Transverse colon (tissue), 4 donors: ENCODE measurements at regions of chr11 and their contacts with region 1.

Region 1: DNA sequence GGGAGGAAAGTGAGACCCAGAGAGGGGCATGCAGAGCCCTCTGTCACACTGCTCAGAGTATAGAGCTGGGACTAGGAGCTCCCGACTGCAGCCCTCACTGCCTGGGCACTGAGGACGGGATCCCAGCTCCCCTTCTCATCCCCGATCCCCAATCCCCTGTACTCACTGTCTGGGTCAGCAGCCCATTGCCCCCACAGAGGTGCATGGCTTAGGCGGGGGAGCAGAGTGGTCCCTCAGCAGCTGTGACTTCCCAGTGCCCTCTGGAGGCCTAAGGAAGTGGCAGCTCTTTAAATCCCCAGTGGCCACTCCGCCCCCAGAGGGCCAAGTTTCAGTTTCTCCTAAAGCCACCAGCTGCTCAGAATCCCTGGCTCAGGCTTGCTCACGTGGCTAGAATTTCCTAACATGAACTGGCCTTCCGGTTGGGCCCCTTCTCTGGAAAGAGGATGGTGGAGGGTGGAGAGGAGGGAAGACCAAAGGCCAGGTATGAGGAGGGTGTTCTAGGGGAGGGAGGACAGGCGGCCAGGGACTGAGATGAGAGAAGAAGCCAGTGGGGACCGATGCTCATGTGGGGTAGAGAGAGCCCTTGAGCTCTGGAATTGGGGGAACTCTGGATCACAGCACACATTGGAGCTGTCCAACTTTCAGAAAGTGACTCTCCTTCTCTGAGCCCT is at the start of gene BATF2:
- DNase-seq: peak; percentile 90
- H3K4me3 ChIP-seq: peak within 1 kb of the TSS; percentile 0 to 63 (median 46)
- H3K27ac ChIP-seq: peak within 1 kb of the TSS; percentile 75 to 89 (median 88)
- H3K4me1 ChIP-seq: peaks cover 22 to 51% (median 38%) of the 10 kb centered on the region in 4 donors
- H3K27me3 ChIP-seq: no peaks in the 10 kb centered on the region
- CTCF ChIP-seq: peak; percentile 42 to 83 (median 60)
- EP300 ChIP-seq: no peak
- POLR2A ChIP-seq: peak; percentile 94
- total RNA-seq, gene BATF2: 4.0 to 13.9 (median 11.2) TPM

Region 2: GRCh38 chr11:64924852-64925271 is 72.0 kb before region 1 on chr11:
- in situ Hi-C with region 1: no loop called
- intact Hi-C with region 1: loop called (anchors 5 kb)
- DNase-seq: peak; percentile 28
- H3K4me3 ChIP-seq: peak overlapping the region; percentile 56 to 81 (median 74)
- H3K27ac ChIP-seq: peak overlapping the region; percentile 92 to 98 (median 94)
- H3K4me1 ChIP-seq: peaks cover 8 to 29% (median 19%) of the 10 kb centered on the region in 4 donors
- H3K27me3 ChIP-seq: no peaks in the 10 kb centered on the region
- CTCF ChIP-seq: no peak
- EP300 ChIP-seq: no peak
- POLR2A ChIP-seq: no peak